Activated CD8-positive, alpha-beta T cell treated with anti-CD3 and anti-CD28 coated beads for 36 hours (primary cell): ENCODE measurements at regions of chr14 and their contacts with region 1.

Region 1: DNA sequence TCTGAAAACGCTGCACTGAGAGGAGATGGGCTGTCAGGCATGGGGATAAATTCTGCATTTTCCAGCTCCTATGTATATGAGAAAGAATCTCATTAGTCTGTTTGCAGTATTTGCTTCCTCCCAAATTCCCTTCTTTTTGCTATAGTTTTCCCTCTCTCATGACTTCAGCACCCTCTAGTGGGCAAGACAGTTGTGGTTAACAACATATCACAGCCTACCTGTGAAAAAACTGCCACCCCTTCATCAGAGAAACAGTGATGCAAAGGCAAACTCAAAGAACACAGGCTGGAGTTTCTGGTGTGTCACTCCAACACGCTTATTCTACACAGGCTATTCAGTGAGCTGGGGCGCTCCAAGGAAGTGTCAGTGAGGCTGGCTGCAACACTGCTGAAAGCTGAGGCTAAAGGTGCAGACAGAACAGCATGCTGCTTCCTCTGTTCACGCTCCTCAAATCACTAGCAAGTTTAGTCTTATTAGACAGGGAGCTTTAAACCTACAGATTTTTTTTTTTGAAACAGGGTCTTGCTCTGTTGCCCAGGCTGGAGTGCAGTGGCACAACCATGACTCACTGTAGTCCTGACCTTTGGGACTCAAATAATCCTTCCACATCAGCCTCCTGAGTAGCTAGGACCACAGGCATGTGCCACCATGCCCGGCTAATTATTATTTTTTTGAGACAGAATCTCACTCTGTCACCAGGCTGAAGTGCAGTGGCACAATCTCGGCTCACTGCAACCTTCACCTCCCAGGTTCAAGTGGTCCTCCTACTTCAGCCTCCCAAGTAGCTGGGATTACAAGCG is 19.3 kb downstream of the ZC2HC1C start:
- DNase-seq: peak; percentile 59
- ATAC-seq: peak; percentile 51
- H3K4me3 Mint-ChIP-seq: no peak overlapping the region
- H3K27ac Mint-ChIP-seq: no peak overlapping the region
- H3K4me1 Mint-ChIP-seq: peaks cover under 1% of the 10 kb centered on the region
- H3K27me3 Mint-ChIP-seq: no peaks in the 10 kb centered on the region
- CTCF ChIP-seq: peak; percentile 84

Region 2: GRCh38 chr14:74852927-74853514 is 235.8 kb before region 1 on chr14:
- CTCF ChIA-PET with region 1: interaction called, 13 read pairs
- POLR2A ChIA-PET with region 1: no interaction called
- intact Hi-C with region 1: no loop called
- DNase-seq: no peak
- ATAC-seq: peak; percentile 28
- H3K4me3 Mint-ChIP-seq: no peak overlapping the region
- H3K27ac Mint-ChIP-seq: no peak overlapping the region
- H3K4me1 Mint-ChIP-seq: peaks cover 15% of the 10 kb centered on the region
- H3K27me3 Mint-ChIP-seq: no peaks in the 10 kb centered on the region
- CTCF ChIP-seq: no peak

Region 3: GRCh38 chr14:74922739-74923401 is 165.9 kb before region 1 on chr14 and contains the start of gene RPS6KL1:
- CTCF ChIA-PET with region 1: interaction called, 15 read pairs
- POLR2A ChIA-PET with region 1: no interaction called
- intact Hi-C with region 1: no loop called
- DNase-seq: peak; percentile 88
- ATAC-seq: peak; percentile 99
- H3K4me3 Mint-ChIP-seq: peak within 1 kb of the TSS; percentile 68
- H3K27ac Mint-ChIP-seq: peak within 1 kb of the TSS; percentile 39
- H3K4me1 Mint-ChIP-seq: peaks cover 8% of the 10 kb centered on the region
- H3K27me3 Mint-ChIP-seq: peaks cover 8% of the 10 kb centered on the region
- CTCF ChIP-seq: no peak
- total RNA-seq, gene RPS6KL1: 4.1 to 5.1 TPM

Region 4: DNA sequence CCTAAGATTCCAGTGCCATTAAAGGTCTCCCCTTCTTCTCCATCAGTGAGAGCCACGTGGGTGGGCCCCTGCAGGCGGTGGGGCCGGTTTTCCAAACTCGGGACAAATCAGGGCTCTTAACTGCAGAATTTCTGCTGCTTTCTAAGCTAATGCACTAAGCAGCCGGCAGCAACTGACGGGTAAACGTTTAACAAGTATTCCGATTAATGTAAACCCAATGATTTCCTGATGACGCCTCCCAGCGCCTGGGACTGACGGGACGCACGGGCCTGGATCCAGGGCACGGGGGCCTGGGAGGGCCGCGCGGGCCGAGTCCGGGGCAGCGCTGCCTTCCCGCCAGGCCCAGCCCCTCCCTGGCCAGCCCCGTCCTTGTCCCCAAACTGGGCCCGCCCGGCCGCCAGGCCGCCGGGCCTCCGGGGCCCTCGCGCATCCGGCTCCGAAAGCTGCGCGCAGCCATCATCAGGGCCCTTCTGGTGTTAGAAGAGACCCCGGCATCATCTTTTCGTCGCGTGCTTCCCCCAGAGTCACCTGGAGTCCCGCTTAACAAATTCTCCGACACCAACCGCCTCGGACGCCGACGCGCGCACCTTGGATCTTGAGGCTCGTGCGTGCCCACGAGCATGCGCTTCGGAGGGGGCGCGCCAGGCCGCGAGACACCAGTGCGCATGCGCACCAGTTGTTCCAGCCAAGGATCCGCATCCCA is 37.8 kb before region 1 on chr14 and contains the start of gene MLH3:
- CTCF ChIA-PET with region 1: interaction called, 11 read pairs
- POLR2A ChIA-PET with region 1: no interaction called
- intact Hi-C with region 1: no loop called
- DNase-seq: peak; percentile 81
- ATAC-seq: peak; percentile 80
- H3K4me3 Mint-ChIP-seq: peak within 1 kb of the TSS; percentile 84
- H3K27ac Mint-ChIP-seq: peak within 1 kb of the TSS; percentile 91
- H3K4me1 Mint-ChIP-seq: peaks cover 56% of the 10 kb centered on the region
- H3K27me3 Mint-ChIP-seq: no peaks in the 10 kb centered on the region
- CTCF ChIP-seq: no peak
- total RNA-seq, gene MLH3: 26.8 to 29.0 TPM

Region 5: GRCh38 chr14:75071549-75071948 is 17.2 kb before region 1 on chr14:
- CTCF ChIA-PET with region 1: interaction called, 14 read pairs
- POLR2A ChIA-PET with region 1: interaction called, 3 read pairs
- intact Hi-C with region 1: no loop called
- DNase-seq: no peak
- ATAC-seq: no peak
- H3K4me3 Mint-ChIP-seq: no peak overlapping the region
- H3K27ac Mint-ChIP-seq: no peak overlapping the region
- H3K4me1 Mint-ChIP-seq: peaks cover 2% of the 10 kb centered on the region
- H3K27me3 Mint-ChIP-seq: no peaks in the 10 kb centered on the region
- CTCF ChIP-seq: no peak

Region 6: DNA sequence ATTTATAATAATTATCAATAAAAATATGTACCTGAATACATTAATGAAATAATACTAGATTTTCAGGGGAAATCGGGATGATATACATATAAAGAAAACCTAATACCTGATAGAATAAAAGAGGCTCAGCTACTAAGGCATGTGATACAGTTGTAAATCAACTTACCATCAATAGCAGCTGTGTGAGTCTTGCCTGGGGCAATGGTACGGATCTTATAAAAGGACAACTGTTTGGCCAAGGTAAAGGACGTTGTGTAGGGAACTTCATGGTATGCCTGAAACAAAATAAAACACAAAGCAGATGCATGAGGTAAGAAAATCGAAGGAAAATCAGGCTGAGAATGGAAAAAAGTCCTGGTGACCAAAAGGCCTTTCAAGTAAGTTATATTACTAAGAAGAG is 12.7 kb after region 1 on chr14:
- CTCF ChIA-PET with region 1: interaction called, 15 read pairs
- POLR2A ChIA-PET with region 1: interaction called, 3 read pairs
- intact Hi-C with region 1: no loop called
- DNase-seq: no peak
- ATAC-seq: no peak
- H3K4me3 Mint-ChIP-seq: no peak overlapping the region
- H3K27ac Mint-ChIP-seq: no peak overlapping the region
- H3K4me1 Mint-ChIP-seq: no peaks in the 10 kb centered on the region
- H3K27me3 Mint-ChIP-seq: no peaks in the 10 kb centered on the region
- CTCF ChIP-seq: no peak

Region 7: GRCh38 chr14:75531660-75532317 is 443.0 kb after region 1 on chr14:
- CTCF ChIA-PET with region 1: no interaction called
- POLR2A ChIA-PET with region 1: no interaction called
- intact Hi-C with region 1: no loop called
- DNase-seq: no peak
- ATAC-seq: no peak
- H3K4me3 Mint-ChIP-seq: no peak overlapping the region
- H3K27ac Mint-ChIP-seq: no peak overlapping the region
- H3K4me1 Mint-ChIP-seq: peaks cover 60% of the 10 kb centered on the region
- H3K27me3 Mint-ChIP-seq: no peaks in the 10 kb centered on the region
- CTCF ChIP-seq: no peak